ENCODE measurements at regions of chr19 and their contacts with region 1.

Region 1: DNA sequence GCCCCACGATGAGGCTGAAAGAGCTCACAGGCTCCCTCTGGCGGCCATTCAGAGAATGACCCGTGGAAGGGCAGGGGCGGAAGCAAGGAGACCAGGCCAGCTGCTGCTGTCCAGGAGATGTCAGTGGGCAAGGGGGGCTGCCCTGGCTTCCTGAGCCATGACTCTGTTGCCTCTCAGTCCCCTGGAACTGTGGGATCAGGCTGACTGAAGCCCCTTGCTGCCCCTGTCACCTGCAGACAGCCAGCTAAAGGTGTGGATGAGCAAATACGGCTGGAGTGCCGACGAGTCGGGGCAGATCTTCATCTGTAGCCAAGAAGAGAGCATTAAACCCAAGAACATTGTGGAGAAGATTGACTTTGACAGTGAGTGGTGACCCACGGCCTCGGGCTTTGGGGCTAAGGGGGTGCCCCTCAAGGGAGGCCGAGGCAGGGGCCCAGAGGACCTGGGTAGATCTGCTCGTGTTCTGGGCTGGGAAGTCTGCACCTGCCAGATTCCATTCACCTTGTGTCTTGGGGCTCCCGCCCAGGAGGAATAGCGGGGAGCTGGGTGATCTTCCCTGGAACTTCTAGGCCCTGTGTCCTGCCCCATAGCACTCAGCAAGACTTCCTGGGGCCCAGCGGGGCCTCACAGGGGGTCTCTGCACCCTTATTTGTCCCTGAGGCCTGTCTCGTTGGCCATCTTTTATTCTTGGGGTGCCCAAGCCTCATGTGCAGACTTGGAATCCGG is 12.5 kb upstream of the ACTN4 start:
- DNase-seq: peak; percentile 60 to 84 (median 67)
- ATAC-seq: no peak
- H3K4me3 ChIP-seq: no peak overlapping the region
- H3K4me3 Mint-ChIP-seq: peak overlapping the region; percentile 11
- H3K27ac ChIP-seq: no peak overlapping the region
- H3K27ac Mint-ChIP-seq: peak overlapping the region; percentile 74
- H3K4me1 ChIP-seq: peaks cover 28% of the 10 kb centered on the region
- H3K4me1 Mint-ChIP-seq: peaks cover 35% of the 10 kb centered on the region
- H3K27me3 ChIP-seq: no peaks in the 10 kb centered on the region
- H3K27me3 Mint-ChIP-seq: no peaks in the 10 kb centered on the region
- CTCF ChIP-seq: peak; percentile 95

Region 2: GRCh38 chr19:38514812-38515633 is 119.9 kb before region 1 on chr19:
- CTCF ChIA-PET with region 1: interaction called, 10 read pairs
- POLR2A ChIA-PET with region 1: interaction called, 4 read pairs
- intact Hi-C with region 1: loop called (anchors 1 kb)
- DNase-seq: peak; percentile 62 to 88 (median 76)
- ATAC-seq: peak; percentile 98
- H3K4me3 ChIP-seq: no peak overlapping the region
- H3K4me3 Mint-ChIP-seq: no peak overlapping the region
- H3K27ac ChIP-seq: no peak overlapping the region
- H3K27ac Mint-ChIP-seq: no peak overlapping the region
- H3K4me1 ChIP-seq: peaks cover 15% of the 10 kb centered on the region
- H3K4me1 Mint-ChIP-seq: peaks cover 9% of the 10 kb centered on the region
- H3K27me3 ChIP-seq: no peaks in the 10 kb centered on the region
- H3K27me3 Mint-ChIP-seq: no peaks in the 10 kb centered on the region
- CTCF ChIP-seq: peak; percentile 94

Region 3: GRCh38 chr19:38618590-38619360 is 16.1 kb before region 1 on chr19 and contains the start of gene EIF3K:
- CTCF ChIA-PET with region 1: interaction called, 12 read pairs
- POLR2A ChIA-PET with region 1: interaction called, 11 read pairs
- intact Hi-C with region 1: no loop called
- DNase-seq: peak; percentile 92 to 100 (median 96)
- ATAC-seq: peak; percentile 63
- H3K4me3 ChIP-seq: peak within 1 kb of the TSS; percentile 97
- H3K4me3 Mint-ChIP-seq: peak within 1 kb of the TSS; percentile 97
- H3K27ac ChIP-seq: peak within 1 kb of the TSS; percentile 84 to 94
- H3K27ac Mint-ChIP-seq: peak within 1 kb of the TSS; percentile 94
- H3K4me1 ChIP-seq: peaks cover 62% of the 10 kb centered on the region
- H3K4me1 Mint-ChIP-seq: peaks cover 59% of the 10 kb centered on the region
- H3K27me3 ChIP-seq: no peaks in the 10 kb centered on the region
- H3K27me3 Mint-ChIP-seq: no peaks in the 10 kb centered on the region
- CTCF ChIP-seq: no peak
- total RNA-seq, gene EIF3K: 309 to 322 TPM

Region 4: DNA sequence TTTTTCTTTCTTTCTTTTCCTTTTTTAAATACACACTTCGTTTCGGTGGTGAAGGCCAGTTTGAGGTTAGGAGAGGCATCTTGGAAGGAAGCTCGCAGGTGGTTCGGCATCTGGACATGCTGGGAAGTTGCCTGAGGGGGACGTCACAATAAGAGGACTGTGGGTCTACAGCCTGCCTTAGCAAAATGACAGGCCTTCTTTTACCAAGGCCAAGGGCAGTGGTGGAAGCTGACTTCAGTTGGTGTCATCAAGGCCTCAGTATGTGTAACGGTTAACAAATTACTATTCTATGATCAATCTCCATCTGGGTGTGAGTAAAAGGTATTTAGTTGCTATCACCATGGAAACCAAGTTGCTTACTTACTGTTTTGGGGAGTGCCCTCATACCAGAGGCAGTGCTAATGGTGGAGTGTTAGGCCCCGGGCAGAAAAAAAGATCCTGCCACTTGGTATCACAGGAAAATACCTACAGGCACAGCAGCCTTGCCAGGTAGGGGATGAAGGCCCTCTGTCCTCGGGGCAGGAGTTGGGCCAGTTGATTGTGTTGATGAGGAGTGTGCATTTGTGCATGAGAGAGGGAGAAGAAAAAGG is 22.8 kb after region 1 on chr19:
- CTCF ChIA-PET with region 1: interaction called, 10 read pairs
- POLR2A ChIA-PET with region 1: interaction called, 5 read pairs
- intact Hi-C with region 1: no loop called
- DNase-seq: peak in 3 of 14 experiments; percentile 22 to 65 (median 64)
- ATAC-seq: peak; percentile 30
- H3K4me3 ChIP-seq: no peak overlapping the region
- H3K4me3 Mint-ChIP-seq: peak overlapping the region; percentile 42
- H3K27ac ChIP-seq: peak overlapping the region in 1 of 2 donors; percentile 33
- H3K27ac Mint-ChIP-seq: peak overlapping the region; percentile 39
- H3K4me1 ChIP-seq: peaks cover 69% of the 10 kb centered on the region
- H3K4me1 Mint-ChIP-seq: peaks cover 60% of the 10 kb centered on the region
- H3K27me3 ChIP-seq: peaks cover 0 to 12% of the 10 kb centered on the region in 2 experiments
- H3K27me3 Mint-ChIP-seq: peaks cover 69% of the 10 kb centered on the region
- CTCF ChIP-seq: no peak

Region 5: GRCh38 chr19:38685666-38686529 is 51.0 kb after region 1 on chr19:
- CTCF ChIA-PET with region 1: interaction called, 10 read pairs
- POLR2A ChIA-PET with region 1: interaction called, 3 read pairs
- intact Hi-C with region 1: loop called (anchors 5 kb)
- DNase-seq: peak in 2 of 14 experiments; percentile 51 to 57
- ATAC-seq: no peak
- H3K4me3 ChIP-seq: no peak overlapping the region
- H3K4me3 Mint-ChIP-seq: peak overlapping the region; percentile 65
- H3K27ac ChIP-seq: peak overlapping the region in 1 of 2 donors; percentile 65
- H3K27ac Mint-ChIP-seq: peak overlapping the region; percentile 84
- H3K4me1 ChIP-seq: peaks cover 77% of the 10 kb centered on the region
- H3K4me1 Mint-ChIP-seq: peaks cover 77% of the 10 kb centered on the region
- H3K27me3 ChIP-seq: no peaks in the 10 kb centered on the region
- H3K27me3 Mint-ChIP-seq: no peaks in the 10 kb centered on the region
- CTCF ChIP-seq: no peak